ENCODE measurements at regions of chr14 and their contacts with region 1.

Region 1: GRCh38 chr14:88667555-88668273 is 104.9 kb downstream of the ZC3H14 start:
- DNase-seq: peak; percentile 70
- H3K4me3 ChIP-seq: no peak overlapping the region
- H3K27ac ChIP-seq: no peak overlapping the region
- H3K4me1 ChIP-seq: peaks cover 6% of the 10 kb centered on the region
- H3K27me3 ChIP-seq: no peaks in the 10 kb centered on the region
- CTCF ChIP-seq: peak; percentile 87 to 94

Region 2: DNA sequence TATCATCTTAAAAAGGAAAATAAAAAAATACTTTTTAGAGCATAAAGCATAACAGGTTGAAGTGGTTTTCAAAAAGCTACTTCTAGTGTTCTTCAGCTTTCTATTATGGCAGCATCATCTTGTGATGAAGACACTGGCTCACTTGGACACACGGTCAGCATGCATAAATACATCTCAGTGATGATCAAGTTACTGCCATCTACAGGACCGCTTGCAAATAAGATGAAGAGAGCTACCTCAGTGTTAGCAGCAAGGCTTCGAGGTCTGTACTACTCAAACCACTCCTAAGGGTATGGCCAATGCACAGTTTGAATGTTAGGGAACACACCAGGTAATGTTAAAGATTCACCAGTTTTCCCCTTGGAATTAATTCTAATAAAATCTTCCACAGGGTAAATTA is 733.5 kb before region 1 on chr14:
- CTCF ChIA-PET with region 1: no interaction called
- dilution Hi-C with region 1: no loop called
- in situ Hi-C with region 1: no loop called
- intact Hi-C with region 1: no loop called
- DNase-seq: no peak
- H3K4me3 ChIP-seq: no peak overlapping the region
- H3K27ac ChIP-seq: no peak overlapping the region
- H3K4me1 ChIP-seq: no peaks in the 10 kb centered on the region
- H3K27me3 ChIP-seq: no peaks in the 10 kb centered on the region
- CTCF ChIP-seq: peak; percentile 3

Region 3: DNA sequence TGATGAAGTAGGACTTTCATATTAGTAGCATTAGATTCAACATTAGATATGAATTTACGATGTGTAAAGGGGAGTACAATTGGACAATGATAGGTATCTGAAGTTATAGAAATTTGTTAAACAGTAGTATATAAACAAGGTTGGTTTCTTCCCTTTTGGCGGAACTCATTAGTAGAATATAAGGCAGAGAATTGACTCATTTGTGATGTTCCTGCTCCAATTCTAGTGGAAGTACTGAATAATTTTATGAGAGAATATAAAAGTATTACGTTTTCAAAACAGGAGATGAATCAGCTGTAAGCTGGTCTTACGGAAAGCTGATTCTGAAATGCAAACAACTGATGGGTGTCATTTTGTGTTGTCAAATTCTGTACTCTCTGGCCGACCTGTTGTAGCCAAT is 91.5 kb before region 1 on chr14:
- CTCF ChIA-PET with region 1: no interaction called
- dilution Hi-C with region 1: no loop called
- in situ Hi-C with region 1: no loop called
- intact Hi-C with region 1: no loop called
- DNase-seq: no peak
- H3K4me3 ChIP-seq: no peak overlapping the region
- H3K27ac ChIP-seq: no peak overlapping the region
- H3K4me1 ChIP-seq: no peaks in the 10 kb centered on the region
- H3K27me3 ChIP-seq: no peaks in the 10 kb centered on the region
- CTCF ChIP-seq: no peak

Region 4: DNA sequence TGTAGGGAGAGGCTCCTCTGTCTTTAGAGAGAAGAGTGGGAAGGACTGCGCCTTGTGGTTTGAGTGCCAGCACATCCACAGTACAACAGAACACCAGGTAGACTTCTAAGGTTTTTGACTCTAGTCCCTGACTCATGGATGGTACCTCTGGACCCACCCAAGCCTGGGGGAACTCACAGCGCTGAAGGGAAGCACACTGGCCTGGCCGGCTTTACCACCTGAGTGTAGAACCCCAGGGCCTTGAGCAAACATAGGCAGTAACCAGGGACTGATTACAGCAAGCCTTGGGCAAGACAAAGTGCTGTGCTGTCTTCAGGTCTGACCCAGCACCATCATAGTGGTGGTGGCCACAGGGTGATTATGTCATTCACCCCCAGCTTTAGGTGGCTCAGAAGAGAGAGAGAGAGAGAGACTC is 107.8 kb after region 1 on chr14:
- CTCF ChIA-PET with region 1: no interaction called
- dilution Hi-C with region 1: no loop called
- in situ Hi-C with region 1: no loop called
- intact Hi-C with region 1: loop called (anchors 5 kb)
- DNase-seq: peak; percentile 94
- H3K4me3 ChIP-seq: no peak overlapping the region
- H3K27ac ChIP-seq: peak overlapping the region; percentile 2
- H3K4me1 ChIP-seq: peaks cover 13% of the 10 kb centered on the region
- H3K27me3 ChIP-seq: no peaks in the 10 kb centered on the region
- CTCF ChIP-seq: no peak

Region 5: DNA sequence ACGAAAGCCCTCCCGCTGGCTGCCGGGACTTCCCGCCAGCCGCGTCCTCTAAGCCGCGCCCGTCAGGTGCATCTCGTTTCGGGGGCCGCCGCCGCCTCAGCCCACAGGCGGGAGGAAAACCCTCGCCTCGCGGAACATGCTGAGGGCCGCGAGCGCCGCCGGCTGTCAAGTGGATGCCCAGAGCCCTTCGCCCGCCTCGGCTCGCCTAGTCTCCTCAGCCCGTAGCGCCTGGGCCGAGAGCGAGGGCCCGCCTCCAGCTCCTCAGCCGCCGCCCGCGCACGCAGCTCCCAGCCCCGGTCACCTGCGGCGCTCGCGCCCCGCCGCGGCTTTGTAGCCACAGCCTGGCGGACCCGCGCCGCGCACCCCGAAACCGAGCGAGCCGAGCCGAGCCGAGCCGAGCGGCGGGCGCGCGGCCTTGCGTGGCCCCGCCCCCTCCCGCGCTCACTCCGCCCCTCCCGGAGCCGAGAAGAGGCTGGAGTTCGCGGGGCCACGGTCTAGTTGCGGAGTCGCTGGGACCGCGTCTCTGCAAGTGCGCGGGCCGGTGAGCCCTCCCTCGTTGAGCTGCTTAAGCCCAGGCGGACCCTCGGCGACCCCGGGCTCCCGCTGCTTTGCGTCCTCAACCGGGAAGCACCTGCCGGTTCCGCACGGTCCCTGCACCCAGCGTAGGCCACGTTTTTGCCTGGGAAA is 125.0 kb after region 1 on chr14 and contains the start of gene EML5:
- CTCF ChIA-PET with region 1: no interaction called
- dilution Hi-C with region 1: no loop called
- in situ Hi-C with region 1: no loop called
- intact Hi-C with region 1: loop called (anchors 1 kb)
- DNase-seq: peak; percentile 84
- H3K4me3 ChIP-seq: peak within 1 kb of the TSS; percentile 68 to 80 (median 71)
- H3K27ac ChIP-seq: peak within 1 kb of the TSS; percentile 25
- H3K4me1 ChIP-seq: peaks cover 5% of the 10 kb centered on the region
- H3K27me3 ChIP-seq: no peaks in the 10 kb centered on the region
- CTCF ChIP-seq: peak; percentile 17 to 44
- total RNA-seq, gene EML5: 0.33 to 2.7 TPM

Region 6: GRCh38 chr14:88824314-88825077 is 156.8 kb after region 1 on chr14 and contains the start of gene TTC8:
- CTCF ChIA-PET with region 1: no interaction called
- dilution Hi-C with region 1: no loop called
- in situ Hi-C with region 1: no loop called
- intact Hi-C with region 1: loop called (anchors 1 kb)
- DNase-seq: peak; percentile 85
- H3K4me3 ChIP-seq: peak within 1 kb of the TSS; percentile 53 to 86 (median 66)
- H3K27ac ChIP-seq: peak within 1 kb of the TSS; percentile 90
- H3K4me1 ChIP-seq: peaks cover 11% of the 10 kb centered on the region
- H3K27me3 ChIP-seq: no peaks in the 10 kb centered on the region
- CTCF ChIP-seq: no peak
- total RNA-seq, gene TTC8: 29.9 to 37.0 TPM

Region 7: DNA sequence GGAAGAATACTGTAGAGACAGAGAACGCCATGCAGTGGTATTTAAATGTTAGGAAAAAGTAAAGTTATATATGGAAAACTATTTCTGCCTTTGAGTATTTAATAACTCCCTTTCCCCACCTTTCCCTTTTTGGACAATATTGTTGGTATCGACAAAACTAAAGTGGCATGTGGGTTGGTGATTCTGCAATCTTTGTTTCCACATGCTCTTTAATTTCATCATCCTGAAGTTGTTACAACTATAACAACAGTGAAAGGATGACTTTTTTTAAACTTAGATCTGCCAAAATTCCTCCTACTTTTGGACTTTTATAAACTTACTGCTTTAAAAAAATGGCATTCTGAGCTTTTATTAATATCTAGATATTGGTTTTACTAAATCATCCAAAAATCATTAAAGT is 182.0 kb after region 1 on chr14:
- CTCF ChIA-PET with region 1: no interaction called
- dilution Hi-C with region 1: no loop called
- in situ Hi-C with region 1: no loop called
- intact Hi-C with region 1: no loop called
- DNase-seq: no peak
- H3K4me3 ChIP-seq: no peak overlapping the region
- H3K27ac ChIP-seq: no peak overlapping the region
- H3K4me1 ChIP-seq: peaks cover 21% of the 10 kb centered on the region
- H3K27me3 ChIP-seq: no peaks in the 10 kb centered on the region
- CTCF ChIP-seq: no peak

Region 8: GRCh38 chr14:88868558-88869159 is 200.9 kb after region 1 on chr14:
- CTCF ChIA-PET with region 1: no interaction called
- dilution Hi-C with region 1: no loop called
- in situ Hi-C with region 1: loop called (anchors 5 to 10 kb)
- intact Hi-C with region 1: loop called (anchors 1 kb)
- DNase-seq: peak; percentile 39
- H3K4me3 ChIP-seq: no peak overlapping the region
- H3K27ac ChIP-seq: no peak overlapping the region
- H3K4me1 ChIP-seq: no peaks in the 10 kb centered on the region
- H3K27me3 ChIP-seq: no peaks in the 10 kb centered on the region
- CTCF ChIP-seq: peak; percentile 50 to 69

Region 9: GRCh38 chr14:89000007-89000942 is 332.6 kb after region 1 on chr14:
- CTCF ChIA-PET with region 1: no interaction called
- dilution Hi-C with region 1: no loop called
- in situ Hi-C with region 1: loop called in 1 of 2 experiments (anchors 25 kb)
- intact Hi-C with region 1: no loop called
- DNase-seq: peak; percentile 93
- H3K4me3 ChIP-seq: no peak overlapping the region
- H3K27ac ChIP-seq: peak overlapping the region; percentile 45
- H3K4me1 ChIP-seq: peaks cover 19% of the 10 kb centered on the region
- H3K27me3 ChIP-seq: no peaks in the 10 kb centered on the region
- CTCF ChIP-seq: no peak

Region 10: DNA sequence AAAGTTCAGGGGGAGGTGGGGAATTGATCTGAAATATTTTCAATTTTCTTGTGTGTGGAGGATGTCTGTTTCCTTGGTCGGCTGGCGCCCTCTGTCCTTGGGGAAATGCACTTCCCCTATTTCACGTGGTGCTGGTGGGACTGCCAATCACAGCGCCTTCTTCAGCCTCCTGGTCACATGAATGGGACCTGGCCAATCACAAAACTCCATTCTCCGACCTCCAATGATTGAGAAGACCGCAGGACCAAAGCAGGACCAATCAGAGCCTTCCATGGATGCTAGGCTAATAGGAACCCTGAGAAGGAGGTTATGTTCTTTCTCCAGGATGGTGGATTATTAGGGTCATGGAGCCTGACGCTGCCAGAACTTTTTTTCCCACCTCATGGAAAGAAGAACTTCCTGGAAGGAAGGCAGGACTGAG is 345.4 kb after region 1 on chr14:
- CTCF ChIA-PET with region 1: no interaction called
- dilution Hi-C with region 1: no loop called
- in situ Hi-C with region 1: loop called in 1 of 2 experiments (anchors 25 kb)
- intact Hi-C with region 1: loop called (anchors 1 kb)
- DNase-seq: no peak
- H3K4me3 ChIP-seq: no peak overlapping the region
- H3K27ac ChIP-seq: no peak overlapping the region
- H3K4me1 ChIP-seq: no peaks in the 10 kb centered on the region
- H3K27me3 ChIP-seq: no peaks in the 10 kb centered on the region
- CTCF ChIP-seq: peak; percentile 15 to 48

Region 11: GRCh38 chr14:89185919-89186855 is 518.5 kb after region 1 on chr14:
- CTCF ChIA-PET with region 1: no interaction called
- dilution Hi-C with region 1: no loop called
- in situ Hi-C with region 1: no loop called
- intact Hi-C with region 1: no loop called
- DNase-seq: peak; percentile 74
- H3K4me3 ChIP-seq: no peak overlapping the region
- H3K27ac ChIP-seq: no peak overlapping the region
- H3K4me1 ChIP-seq: no peaks in the 10 kb centered on the region
- H3K27me3 ChIP-seq: no peaks in the 10 kb centered on the region
- CTCF ChIP-seq: no peak